Ascending aorta (tissue), 2 donors: ENCODE measurements at regions of chr5 and their contacts with region 1.

Region 1: DNA sequence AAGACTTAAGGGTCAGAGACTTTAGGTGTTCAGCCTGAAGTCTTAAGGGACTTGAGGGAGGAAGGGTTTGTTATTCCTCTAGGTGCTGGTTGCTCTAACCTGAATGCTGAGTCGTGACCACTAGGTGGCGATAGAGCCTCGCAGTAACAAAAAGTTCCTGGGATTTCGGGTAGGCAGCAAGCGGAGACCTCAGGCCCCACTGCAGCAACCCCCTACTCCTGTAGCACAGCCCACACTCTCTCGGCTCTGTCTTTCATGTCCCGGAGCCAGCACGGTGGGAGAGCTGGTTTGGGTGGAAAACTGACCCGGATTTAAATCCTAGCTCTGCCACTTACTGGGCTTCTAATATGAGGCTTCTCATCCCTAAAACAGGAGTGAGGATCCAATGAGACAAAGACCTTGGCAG is 100.3 kb upstream of the PANK3 start:
- DNase-seq: peak in 1 of 2 donors; percentile 83
- H3K4me3 ChIP-seq: no peak overlapping the region
- H3K27ac ChIP-seq: no peak overlapping the region
- H3K4me1 ChIP-seq: peaks cover 0 to 3% of the 10 kb centered on the region in 2 donors
- H3K27me3 ChIP-seq: no peaks in the 10 kb centered on the region
- CTCF ChIP-seq: peak; percentile 68 to 94 (median 83)

Region 2: GRCh38 chr5:168740092-168740800 is 60.7 kb after region 1 on chr5:
- intact Hi-C with region 1: loop called (anchors 5 kb)
- DNase-seq: no peak
- H3K4me3 ChIP-seq: peak overlapping the region; percentile 19 to 52
- H3K27ac ChIP-seq: peak overlapping the region; percentile 77 to 83
- H3K4me1 ChIP-seq: peaks cover 12 to 15% of the 10 kb centered on the region in 2 donors
- H3K27me3 ChIP-seq: no peaks in the 10 kb centered on the region
- CTCF ChIP-seq: no peak